ENCODE measurements at regions of chr15 and their contacts with region 1.

Region 1: DNA sequence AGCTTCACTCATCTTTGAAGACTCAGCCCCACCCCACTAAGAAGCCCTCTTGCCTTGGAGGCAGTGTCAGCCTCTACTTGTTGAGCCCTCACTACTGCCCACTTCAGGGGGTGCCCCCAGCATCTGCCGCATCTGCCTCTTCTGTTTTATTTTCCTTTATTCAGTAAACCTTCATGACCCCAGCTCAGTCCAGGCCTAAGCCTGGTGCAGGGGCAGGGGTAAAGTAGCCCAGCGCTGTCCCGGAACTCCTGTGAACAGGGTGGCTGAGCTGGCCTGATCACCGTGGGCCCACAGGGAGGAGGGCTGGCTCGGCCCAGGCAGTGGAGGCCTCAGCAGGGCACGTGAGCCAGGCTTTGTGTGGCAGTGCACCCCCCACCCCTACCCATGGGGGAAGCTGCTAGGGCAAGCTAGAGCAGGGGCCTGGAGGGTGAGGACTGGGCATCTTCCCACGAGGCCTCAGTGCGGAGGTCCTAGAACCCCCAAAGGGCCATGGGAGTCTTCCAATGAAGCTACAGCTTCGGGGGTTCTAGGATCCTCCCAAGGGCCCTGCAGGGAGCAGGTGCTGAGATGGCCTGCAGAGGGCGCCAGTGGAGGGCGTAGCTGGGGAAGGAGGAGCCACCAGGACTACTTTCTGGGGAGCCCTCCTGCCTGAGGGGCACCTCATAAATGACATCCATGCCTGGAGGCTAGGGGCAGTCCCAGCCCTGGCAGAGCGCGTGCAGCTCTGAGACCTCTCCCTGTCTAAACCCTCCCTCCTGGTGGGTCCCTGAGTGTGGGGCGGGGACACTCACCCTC is 36.0 kb downstream of the TSPAN3 start:
- DNase-seq: no peak
- ATAC-seq: peak; percentile 20; the same call in 2 of the 3 replicates
- H3K4me3 ChIP-seq: no peak overlapping the region
- H3K27ac ChIP-seq: no peak overlapping the region
- H3K4me1 ChIP-seq: no peaks in the 10 kb centered on the region
- H3K27me3 ChIP-seq: no peaks in the 10 kb centered on the region
- CTCF ChIP-seq: peak; percentile 26 to 66 (median 58)
- EP300 ChIP-seq: no peak
- POLR2A ChIP-seq: no peak
- RAD21 ChIP-seq: peak; percentile 48

Region 2: DNA sequence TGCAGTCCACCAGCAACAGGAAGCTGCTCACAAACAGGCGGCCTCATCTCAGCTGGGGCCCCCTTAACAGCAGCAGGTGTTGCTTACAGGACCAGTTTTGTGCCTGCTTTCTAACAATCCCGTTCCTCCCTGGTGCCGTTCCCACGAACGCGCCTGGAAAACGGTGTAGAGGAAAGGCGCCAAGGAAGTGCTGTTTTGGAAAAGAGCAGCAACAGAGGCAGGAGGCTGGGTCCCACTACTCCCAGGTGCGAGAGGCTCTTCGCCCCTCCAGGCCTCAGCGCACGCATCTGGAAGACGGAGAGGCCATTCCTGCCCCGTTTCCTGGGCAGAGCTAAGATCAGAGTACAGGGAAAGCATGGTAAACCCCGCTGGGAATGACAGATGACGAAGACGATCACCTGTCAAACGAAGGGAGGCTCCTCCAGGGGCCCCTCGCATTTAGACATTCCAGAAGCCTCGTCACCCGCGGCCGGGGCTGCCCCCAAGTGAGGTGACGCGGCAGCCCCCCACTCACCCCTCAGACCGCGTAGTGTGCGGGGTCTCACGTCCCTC is 130.4 kb before region 1 on chr15:
- CTCF ChIA-PET with region 1: interaction called, 15 read pairs
- POLR2A ChIA-PET with region 1: no interaction called
- RAD21 ChIA-PET with region 1: no interaction called
- SMC1A ChIA-PET with region 1: interaction called, 4 read pairs
- in situ Hi-C with region 1: no loop called
- intact Hi-C with region 1: no loop called
- DNase-seq: no peak
- ATAC-seq: peak; percentile 32
- H3K4me3 ChIP-seq: peak overlapping the region; percentile 78
- H3K27ac ChIP-seq: peak overlapping the region; percentile 41
- H3K4me1 ChIP-seq: peaks cover 13% of the 10 kb centered on the region
- H3K27me3 ChIP-seq: no peaks in the 10 kb centered on the region
- CTCF ChIP-seq: no peak
- EP300 ChIP-seq: no peak
- POLR2A ChIP-seq: no peak
- RAD21 ChIP-seq: no peak

Region 3: DNA sequence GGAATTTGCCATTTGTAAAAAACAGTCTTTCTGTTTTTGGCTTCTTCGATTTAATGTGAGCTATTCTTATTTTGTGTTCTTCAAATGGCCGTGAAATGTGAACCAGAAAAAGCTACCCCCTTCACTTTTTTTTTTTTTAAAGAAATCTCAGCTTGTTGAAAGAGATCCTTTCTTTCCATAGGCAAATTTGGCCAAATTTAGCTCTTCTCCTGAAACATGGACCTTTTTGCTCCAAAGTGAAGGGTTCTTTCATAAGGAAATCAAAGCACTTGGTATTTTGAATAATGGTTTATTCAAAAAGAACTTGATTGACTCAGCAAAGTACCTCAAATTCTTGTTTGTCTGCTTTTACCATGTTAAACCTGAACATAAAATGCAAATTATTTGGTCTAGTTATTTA is 93.3 kb before region 1 on chr15:
- CTCF ChIA-PET with region 1: interaction called, 16 read pairs
- POLR2A ChIA-PET with region 1: no interaction called
- RAD21 ChIA-PET with region 1: interaction called, 10 read pairs
- SMC1A ChIA-PET with region 1: interaction called, 9 read pairs
- in situ Hi-C with region 1: no loop called
- intact Hi-C with region 1: no loop called
- DNase-seq: no peak
- ATAC-seq: no peak
- H3K4me3 ChIP-seq: no peak overlapping the region
- H3K27ac ChIP-seq: no peak overlapping the region
- H3K4me1 ChIP-seq: peaks cover 2% of the 10 kb centered on the region; the same call in 1 of the 2 replicates
- H3K27me3 ChIP-seq: no peaks in the 10 kb centered on the region
- CTCF ChIP-seq: no peak
- EP300 ChIP-seq: no peak
- POLR2A ChIP-seq: no peak
- RAD21 ChIP-seq: no peak

Region 4: DNA sequence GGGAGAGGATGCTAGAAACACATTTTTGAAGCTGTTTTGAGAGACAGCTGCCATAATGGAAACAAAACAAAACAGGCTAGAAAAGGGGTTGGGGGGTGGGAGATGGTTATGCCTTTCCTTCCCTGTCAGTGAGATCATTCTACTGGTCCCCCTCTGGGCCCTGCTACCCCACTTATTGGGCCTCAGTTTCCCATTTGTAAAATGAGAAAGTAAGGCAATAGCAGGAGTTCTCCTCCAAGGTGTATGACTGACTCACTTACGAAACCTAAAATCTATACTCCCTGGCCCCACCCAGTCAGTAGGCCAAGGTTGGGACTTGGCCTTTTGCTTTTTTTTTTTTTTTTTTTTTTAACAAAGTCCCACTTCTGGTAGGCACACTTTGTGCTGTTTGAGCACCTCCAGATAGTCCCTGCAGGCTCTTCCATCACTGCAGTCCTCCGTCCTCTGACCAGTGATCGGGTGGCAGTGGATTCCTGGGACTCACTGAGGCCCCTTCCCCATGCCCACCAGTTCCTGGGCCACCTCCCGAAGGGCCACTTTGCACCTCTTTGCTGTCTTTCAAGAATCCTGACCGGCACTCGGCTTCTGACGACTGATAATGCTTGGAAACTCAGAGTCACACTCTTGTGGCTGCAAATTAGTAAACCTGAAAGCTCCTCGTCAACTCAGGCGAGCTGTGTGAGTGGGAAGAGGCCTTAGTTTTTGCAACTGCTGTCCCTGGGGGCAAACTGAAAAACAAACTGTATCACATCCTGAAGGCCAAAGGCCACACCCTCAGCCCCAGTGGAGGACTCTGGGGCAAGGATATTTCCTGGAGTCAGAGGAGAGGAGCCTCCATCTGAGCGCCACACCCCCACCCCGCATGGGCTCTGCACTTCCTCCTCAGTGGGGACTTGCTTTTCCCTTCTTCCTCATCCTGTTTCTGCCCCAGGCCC is 46.7 kb before region 1 on chr15:
- CTCF ChIA-PET with region 1: interaction called, 483 read pairs
- POLR2A ChIA-PET with region 1: no interaction called
- RAD21 ChIA-PET with region 1: interaction called, 9 read pairs
- SMC1A ChIA-PET with region 1: interaction called, 6 read pairs
- in situ Hi-C with region 1: no loop called
- intact Hi-C with region 1: no loop called
- DNase-seq: peak; percentile 90
- ATAC-seq: peak; percentile 91
- H3K4me3 ChIP-seq: peak overlapping the region; percentile 40; the same call in 1 of the 2 replicates
- H3K27ac ChIP-seq: peak overlapping the region; percentile 89
- H3K4me1 ChIP-seq: peaks cover 41% of the 10 kb centered on the region
- H3K27me3 ChIP-seq: no peaks in the 10 kb centered on the region
- CTCF ChIP-seq: no peak
- EP300 ChIP-seq: peak; percentile 79 to 94; a peak in 3 of 4 replicates
- POLR2A ChIP-seq: peak; percentile 53
- RAD21 ChIP-seq: peak; percentile 25; the same call in 1 of the 2 replicates

Region 5: DNA sequence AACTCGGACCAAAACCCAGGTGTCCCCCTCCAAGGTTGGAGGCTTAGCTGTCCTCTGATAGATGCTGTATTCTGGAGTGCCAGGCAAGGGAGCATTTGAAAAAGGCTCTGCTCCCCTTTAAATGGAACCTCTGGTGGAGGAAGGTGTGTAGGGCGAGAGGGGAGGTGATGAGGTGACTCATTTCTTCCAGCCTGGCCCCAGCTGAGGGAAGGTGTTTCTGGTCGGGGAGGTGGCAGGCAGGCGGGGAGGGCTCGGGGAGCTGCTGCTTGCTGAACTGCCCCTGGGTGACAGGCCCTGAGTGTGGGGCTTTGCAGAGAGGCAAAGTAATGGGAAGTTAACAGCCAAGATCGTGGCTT is 21.1 kb before region 1 on chr15:
- CTCF ChIA-PET with region 1: interaction called, 8 read pairs
- POLR2A ChIA-PET with region 1: no interaction called
- RAD21 ChIA-PET with region 1: interaction called, 10 read pairs
- SMC1A ChIA-PET with region 1: interaction called, 18 read pairs
- in situ Hi-C with region 1: no loop called
- intact Hi-C with region 1: no loop called
- DNase-seq: no peak
- ATAC-seq: peak; percentile 82
- H3K4me3 ChIP-seq: no peak overlapping the region
- H3K27ac ChIP-seq: peak overlapping the region; percentile 66; the same call in 1 of the 2 replicates
- H3K4me1 ChIP-seq: peaks cover 31% of the 10 kb centered on the region
- H3K27me3 ChIP-seq: no peaks in the 10 kb centered on the region
- CTCF ChIP-seq: 0 out of 6 replicates have a peak, but pooled peaks of 1 of the 3 experiments have one; percentile 1
- EP300 ChIP-seq: peak; percentile 52 to 54; a peak in 3 of 4 replicates
- POLR2A ChIP-seq: no peak
- RAD21 ChIP-seq: no peak

Region 6: GRCh38 chr15:77024271-77025082 is 10.4 kb before region 1 on chr15:
- CTCF ChIA-PET with region 1: interaction called, 25 read pairs
- POLR2A ChIA-PET with region 1: interaction called, 5 read pairs
- RAD21 ChIA-PET with region 1: interaction called, 11 read pairs
- SMC1A ChIA-PET with region 1: interaction called, 18 read pairs
- in situ Hi-C with region 1: no loop called
- intact Hi-C with region 1: no loop called
- DNase-seq: no peak
- ATAC-seq: peak; percentile 66
- H3K4me3 ChIP-seq: no peak overlapping the region
- H3K27ac ChIP-seq: no peak overlapping the region
- H3K4me1 ChIP-seq: peaks cover 33% of the 10 kb centered on the region
- H3K27me3 ChIP-seq: no peaks in the 10 kb centered on the region
- CTCF ChIP-seq: peak; percentile 75 to 93 (median 83)
- EP300 ChIP-seq: no peak
- POLR2A ChIP-seq: no peak
- RAD21 ChIP-seq: peak; percentile 83

Region 7: DNA sequence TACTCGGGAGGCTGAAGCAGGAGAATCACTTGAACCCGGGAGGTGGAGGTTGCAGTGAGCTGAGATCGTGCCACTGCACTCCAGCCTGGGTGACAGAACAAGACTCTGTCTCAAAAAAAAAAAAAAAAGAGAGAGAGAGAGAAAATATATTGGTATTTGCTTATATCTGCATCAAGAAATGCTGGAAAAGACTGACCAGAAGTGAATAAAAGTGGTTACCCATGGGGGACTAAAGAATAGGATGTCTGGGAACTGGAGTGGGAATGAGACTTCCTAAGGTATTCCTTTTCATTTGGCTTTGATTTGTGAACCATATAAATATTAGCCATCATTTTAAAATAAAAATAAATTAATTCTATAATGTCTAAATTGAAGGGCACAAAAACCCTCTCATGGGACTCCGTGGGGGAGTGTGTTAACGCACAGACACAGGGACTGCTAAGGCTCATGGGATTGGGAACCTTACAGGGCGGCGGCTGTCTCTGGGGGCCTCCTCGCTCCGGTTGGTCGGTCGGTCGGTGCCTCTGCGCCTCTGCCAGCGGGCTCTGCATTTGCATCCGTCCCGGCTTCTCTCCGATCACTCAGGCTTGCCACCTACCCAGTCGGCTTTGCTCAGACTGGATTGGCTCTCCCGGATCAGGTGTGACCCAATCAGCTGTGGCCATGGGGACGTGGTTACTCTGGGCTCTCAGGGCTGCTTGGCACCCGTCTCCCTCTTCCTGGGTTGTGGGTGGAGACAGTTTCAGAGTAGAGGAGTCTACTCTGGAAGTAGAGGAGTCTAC is 48.7 kb after region 1 on chr15:
- CTCF ChIA-PET with region 1: no interaction called
- POLR2A ChIA-PET with region 1: no interaction called
- RAD21 ChIA-PET with region 1: no interaction called
- SMC1A ChIA-PET with region 1: no interaction called
- in situ Hi-C with region 1: no loop called
- intact Hi-C with region 1: loop called (anchors 5 kb)
- DNase-seq: peak; percentile 54
- ATAC-seq: peak; percentile 94
- H3K4me3 ChIP-seq: no peak overlapping the region; the same call in 1 of the 2 replicates
- H3K27ac ChIP-seq: no peak overlapping the region
- H3K4me1 ChIP-seq: peaks cover 35% of the 10 kb centered on the region
- H3K27me3 ChIP-seq: no peaks in the 10 kb centered on the region
- CTCF ChIP-seq: no peak
- EP300 ChIP-seq: no peak
- POLR2A ChIP-seq: no peak
- RAD21 ChIP-seq: no peak

Measured in GM12878 (cell line).